ENCODE measurements at regions of chr12 and their contacts with region 1.

Region 1: GRCh38 chr12:71663561-71664294 is at the start of gene ZFC3H1:
- DNase-seq: peak; percentile 91
- H3K4me3 Mint-ChIP-seq: peak within 1 kb of the TSS; percentile 100
- H3K27ac Mint-ChIP-seq: peak within 1 kb of the TSS; percentile 100
- H3K4me1 Mint-ChIP-seq: peaks cover 35% of the 10 kb centered on the region
- H3K27me3 Mint-ChIP-seq: no peaks in the 10 kb centered on the region
- total RNA-seq, gene ZFC3H1: 70.4 and 72.5 TPM in 2 replicates

Region 2: DNA sequence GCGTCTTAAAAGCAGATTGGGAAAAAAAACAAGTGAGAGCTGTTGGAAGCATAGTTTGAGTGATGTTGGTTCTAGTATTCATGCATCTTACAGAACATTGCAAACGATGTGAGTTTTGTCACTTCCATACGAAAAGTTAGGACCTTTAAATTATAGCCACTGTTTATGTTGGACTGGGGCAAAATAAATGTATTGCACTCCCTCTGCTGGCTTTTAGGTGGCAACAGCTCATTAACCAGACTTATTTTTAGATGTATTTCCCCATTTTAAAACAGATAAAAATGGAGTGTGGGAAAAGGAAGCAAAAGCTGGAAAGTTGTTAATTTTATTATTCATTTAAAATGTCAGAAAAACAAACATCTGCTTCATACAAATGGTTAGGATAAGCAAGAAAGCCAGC is 112.2 kb before region 1 on chr12:
- intact Hi-C with region 1: no loop called
- DNase-seq: no peak
- H3K4me3 Mint-ChIP-seq: no peak overlapping the region
- H3K27ac Mint-ChIP-seq: no peak overlapping the region
- H3K4me1 Mint-ChIP-seq: no peaks in the 10 kb centered on the region
- H3K27me3 Mint-ChIP-seq: no peaks in the 10 kb centered on the region

Region 3: DNA sequence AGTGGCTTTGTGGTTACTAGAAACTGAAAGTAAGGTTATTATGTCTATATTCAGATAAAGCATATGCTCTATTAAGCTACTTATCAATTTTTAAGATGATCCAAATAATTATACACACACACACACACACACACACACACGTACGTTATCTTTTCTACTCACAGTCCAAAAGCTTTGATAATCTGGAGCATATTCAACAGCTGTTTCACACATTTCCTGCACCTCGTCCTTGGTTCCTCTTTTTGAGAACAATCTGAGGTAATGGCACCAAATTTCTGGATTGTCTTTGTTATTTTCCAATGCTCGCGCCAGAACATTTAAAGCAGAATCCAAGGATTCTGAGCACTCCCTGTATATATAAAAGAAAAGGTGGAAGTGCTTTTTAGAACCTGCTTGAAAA is 37.6 kb before region 1 on chr12:
- intact Hi-C with region 1: no loop called
- DNase-seq: no peak
- H3K4me3 Mint-ChIP-seq: peak overlapping the region; percentile 5
- H3K27ac Mint-ChIP-seq: peak overlapping the region; percentile 19
- H3K4me1 Mint-ChIP-seq: peaks cover 13% of the 10 kb centered on the region
- H3K27me3 Mint-ChIP-seq: no peaks in the 10 kb centered on the region

Region 4: DNA sequence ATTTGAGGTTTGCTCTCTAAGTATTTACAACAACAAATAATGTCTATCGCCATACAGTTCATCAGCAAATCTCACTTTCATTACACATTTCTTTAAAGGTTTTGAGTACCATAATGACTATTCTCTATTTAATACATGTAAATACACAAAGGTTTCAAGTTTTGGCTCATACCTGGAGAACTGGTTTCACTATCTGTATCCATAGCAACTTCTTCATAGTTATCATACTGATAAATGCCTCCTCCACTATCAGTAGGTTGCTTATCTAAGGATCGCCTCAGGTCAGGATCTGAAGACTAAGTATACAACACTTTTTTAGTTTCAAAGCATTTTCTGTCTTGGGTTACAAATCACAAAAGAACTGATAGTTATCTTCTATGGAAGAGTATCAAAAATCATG is 21.5 kb before region 1 on chr12:
- intact Hi-C with region 1: loop called (anchors 1 kb)
- DNase-seq: no peak
- H3K4me3 Mint-ChIP-seq: no peak overlapping the region
- H3K27ac Mint-ChIP-seq: peak overlapping the region; percentile 76
- H3K4me1 Mint-ChIP-seq: peaks cover 39% of the 10 kb centered on the region
- H3K27me3 Mint-ChIP-seq: no peaks in the 10 kb centered on the region

Region 5: DNA sequence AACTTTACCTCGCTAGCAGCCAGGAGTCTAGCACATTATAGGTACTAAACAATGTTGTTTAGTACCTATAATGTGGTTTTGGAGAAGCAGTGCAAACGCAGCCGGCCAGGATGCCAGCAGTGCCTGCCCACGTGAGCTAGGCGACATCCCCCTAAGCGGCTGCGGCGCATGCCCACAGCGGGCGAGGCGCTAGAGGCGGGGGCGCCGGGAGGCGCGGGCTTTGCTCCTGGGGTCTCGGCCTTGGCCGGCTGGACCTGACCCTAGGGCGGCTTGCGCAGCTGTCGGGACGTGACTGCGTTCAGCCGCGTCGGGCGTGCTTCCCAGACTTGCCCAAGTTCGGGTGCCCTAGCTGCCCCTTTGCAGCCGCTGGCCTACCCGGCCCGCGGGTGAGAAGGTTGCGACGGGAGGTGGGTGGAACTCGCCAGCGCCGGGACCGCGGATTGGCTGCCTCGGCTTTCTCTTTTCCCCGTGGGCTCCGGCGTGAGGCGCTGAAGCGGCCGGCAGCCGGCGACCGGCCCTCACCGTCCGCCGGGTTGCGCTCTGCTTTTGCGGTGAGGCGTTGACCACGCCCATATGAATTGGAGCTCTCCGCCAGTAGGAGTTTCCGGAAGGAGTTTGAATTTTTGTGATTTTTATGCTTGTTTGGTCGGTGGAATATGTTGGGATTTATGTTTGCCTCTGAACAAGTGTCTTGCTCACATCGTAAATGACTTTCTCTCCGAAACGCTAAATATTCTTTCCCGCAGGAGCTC is 22.4 kb after region 1 on chr12 and contains the start of gene TMEM19:
- intact Hi-C with region 1: loop called (anchors 1 kb)
- DNase-seq: peak; percentile 79
- H3K4me3 Mint-ChIP-seq: peak within 1 kb of the TSS; percentile 90
- H3K27ac Mint-ChIP-seq: peak within 1 kb of the TSS; percentile 95
- H3K4me1 Mint-ChIP-seq: peaks cover 21% of the 10 kb centered on the region
- H3K27me3 Mint-ChIP-seq: no peaks in the 10 kb centered on the region
- total RNA-seq, gene TMEM19: 11.0 and 14.3 TPM in 2 replicates

Region 6: GRCh38 chr12:71754461-71755145 is 90.9 kb after region 1 on chr12 and contains the start of gene RAB21:
- intact Hi-C with region 1: loop called (anchors 1 kb)
- DNase-seq: peak; percentile 97
- H3K4me3 Mint-ChIP-seq: peak within 1 kb of the TSS; percentile 93
- H3K27ac Mint-ChIP-seq: peak within 1 kb of the TSS; percentile 95
- H3K4me1 Mint-ChIP-seq: peaks cover 22% of the 10 kb centered on the region
- H3K27me3 Mint-ChIP-seq: peaks cover 24% of the 10 kb centered on the region
- total RNA-seq, gene RAB21: 95.4 and 96.1 TPM in 2 replicates

Measured in activated T-helper 2 cell treated with anti-CD3 and anti-CD28 coated beads, Interferon-gamma antibody, Interleukin-2, Interleukin-4, amounts not matched to agents 10 μg/mL and 5 μg/mL and 100 μg/mL, durations not matched to agents 14 hours and 24 hours and 36 hours (primary cell).